Right ventricle myocardium inferior (tissue), 1 donor: ENCODE measurements at regions of chr20 and their contacts with region 1.

Region 1: DNA sequence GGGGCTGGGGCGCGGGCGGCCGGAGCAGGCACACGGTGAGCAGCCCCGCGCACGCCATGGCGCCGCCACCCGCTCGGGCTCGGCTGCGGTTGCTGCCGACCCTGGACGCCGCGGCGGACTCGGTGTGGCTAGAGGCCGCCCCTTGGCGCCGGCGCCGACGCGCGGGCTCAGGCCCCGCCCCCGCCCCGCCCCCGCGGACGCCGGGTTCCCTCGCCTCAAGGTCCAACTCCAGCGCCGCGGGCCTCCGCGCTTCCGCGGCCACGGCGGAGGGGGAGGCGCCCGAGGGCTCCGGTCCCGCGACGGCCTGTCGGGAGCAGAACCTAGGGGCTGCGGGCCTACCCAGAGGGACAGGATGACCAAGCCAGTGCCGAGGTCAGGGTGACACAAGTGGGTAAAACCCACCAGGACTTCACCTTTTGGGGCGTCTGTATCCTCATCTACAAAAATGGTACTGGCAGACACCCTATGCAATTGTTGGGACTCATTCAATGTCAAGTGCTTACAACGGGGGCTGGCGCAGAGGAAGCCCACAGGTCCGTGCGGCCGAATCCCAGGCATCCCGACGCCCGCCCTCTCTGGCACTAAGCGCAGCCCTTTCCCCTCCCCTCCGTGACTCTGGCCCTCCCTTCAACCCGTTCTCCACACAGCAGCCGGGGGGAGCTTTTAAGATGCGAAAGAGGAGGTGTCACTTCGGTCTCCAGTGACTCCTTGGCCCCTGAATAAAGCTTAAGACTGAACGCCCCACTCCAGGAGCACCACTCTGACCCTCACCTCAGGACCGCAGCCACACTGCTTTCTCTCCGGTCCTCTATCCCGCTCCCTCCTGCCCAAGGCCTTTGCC is at the start of gene NECAB3:
- DNase-seq: peak; percentile 91
- ATAC-seq: peak; percentile 79
- total RNA-seq, gene NECAB3: 70.8 TPM

Region 2: DNA sequence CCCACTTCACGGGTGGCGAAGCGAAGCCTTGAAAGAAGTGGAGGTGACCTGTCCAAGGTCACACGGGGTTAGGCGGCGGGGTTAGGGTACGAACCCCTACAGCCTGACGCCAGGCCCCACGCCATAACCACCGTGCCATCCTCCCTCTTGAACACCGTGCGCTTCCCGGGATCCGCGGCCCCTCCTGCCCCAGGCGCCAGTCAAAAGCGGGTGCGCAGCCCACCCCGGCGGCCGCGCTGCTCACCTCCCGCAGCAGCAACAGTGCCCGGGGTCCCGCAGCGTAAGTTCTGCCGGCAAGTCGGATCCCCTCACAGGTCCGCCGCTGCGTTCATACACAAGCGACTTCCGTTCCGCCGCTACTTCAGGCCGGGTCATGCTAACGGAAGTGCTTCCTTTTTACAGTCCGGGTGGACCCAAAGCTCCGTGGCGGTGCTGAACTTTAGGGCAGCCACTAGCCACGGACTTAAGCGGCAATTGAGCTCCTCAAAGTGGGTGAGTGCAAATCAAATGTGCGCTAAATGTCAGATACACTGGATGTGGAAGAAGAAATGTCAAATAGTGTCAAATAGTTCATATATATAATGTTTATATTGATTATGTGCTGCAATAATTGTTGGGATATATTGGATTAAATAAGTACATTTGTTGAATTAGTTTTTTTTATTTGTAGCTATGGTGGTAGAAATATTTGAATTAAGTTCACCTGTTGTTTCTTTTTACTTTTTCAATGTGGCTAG is 273.2 kb before region 1 on chr20 and contains the start of gene CDK5RAP1:
- intact Hi-C with region 1: loop called (anchors 5 kb)
- DNase-seq: peak; percentile 93
- ATAC-seq: peak; percentile 95
- total RNA-seq, gene CDK5RAP1: 18.3 TPM

Region 3: GRCh38 chr20:33709398-33709797 is 34.9 kb after region 1 on chr20:
- intact Hi-C with region 1: no loop called
- DNase-seq: no peak
- ATAC-seq: no peak

Region 4: GRCh38 chr20:33719989-33720709 is 45.6 kb after region 1 on chr20 and contains the start of gene PXMP4:
- intact Hi-C with region 1: loop called (anchors 5 kb)
- DNase-seq: peak; percentile 93
- ATAC-seq: peak; percentile 99
- total RNA-seq, gene PXMP4: 11.4 TPM